K562 (cell line): ENCODE measurements at regions of chr11 and their contacts with region 1.

Region 1: DNA sequence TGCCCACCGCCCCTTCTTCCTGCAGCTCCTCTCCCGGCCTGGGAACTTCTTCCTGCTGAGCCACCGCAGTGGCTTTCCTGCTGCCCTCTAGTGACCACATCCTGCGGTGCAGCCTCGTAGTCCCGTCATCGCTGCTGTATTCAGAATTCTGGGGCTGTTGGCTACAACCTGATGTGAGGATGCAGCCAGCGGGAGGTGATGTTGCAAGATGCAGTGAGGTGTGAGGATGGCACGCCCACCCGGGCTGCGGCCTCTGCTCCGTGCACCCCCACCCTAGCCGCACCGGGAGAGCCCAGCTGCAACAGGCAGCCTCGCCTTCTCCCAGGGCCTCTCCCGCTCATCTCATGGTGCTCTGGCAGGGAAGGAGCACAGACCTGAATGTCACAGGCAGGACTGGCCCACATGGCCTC is 10.1 kb downstream of the CHST1 start:
- DNase-seq: peak; percentile 72 to 84 (median 82)
- ATAC-seq: peak; percentile 93
- H3K4me3 ChIP-seq: no peak overlapping the region
- H3K27ac ChIP-seq: no peak overlapping the region
- H3K4me1 ChIP-seq: peaks cover 0 to 14% of the 10 kb centered on the region in 2 experiments; a peak in 1 of 5 replicates
- H3K27me3 ChIP-seq: peaks cover 0 to 27% of the 10 kb centered on the region in 2 experiments; a peak in 3 of 5 replicates
- CTCF ChIP-seq: peak; percentile 89 to 94 (median 89)
- EP300 ChIP-seq: no peak
- POLR2A ChIP-seq: no peak
- RAD21 ChIP-seq: peak; percentile 63 to 75

Region 2: GRCh38 chr11:45371251-45372115 is 283.9 kb before region 1 on chr11:
- CTCF ChIA-PET with region 1: interaction called, 5 read pairs
- POLR2A ChIA-PET with region 1: no interaction called
- in situ Hi-C with region 1: no loop called
- intact Hi-C with region 1: loop called (anchors 2 kb)
- DNase-seq: peak; percentile 68 to 79 (median 77)
- ATAC-seq: peak; percentile 94
- H3K4me3 ChIP-seq: no peak overlapping the region
- H3K27ac ChIP-seq: no peak overlapping the region
- H3K4me1 ChIP-seq: peaks cover 0 to 2% of the 10 kb centered on the region in 2 experiments; a peak in 1 of 5 replicates
- H3K27me3 ChIP-seq: peaks cover 14 to 40% of the 10 kb centered on the region in 2 experiments
- CTCF ChIP-seq: peak; percentile 85 to 94 (median 91)
- EP300 ChIP-seq: no peak
- POLR2A ChIP-seq: no peak
- RAD21 ChIP-seq: peak; percentile 68 to 79

Region 3: GRCh38 chr11:45457649-45458048 is 197.7 kb before region 1 on chr11:
- CTCF ChIA-PET with region 1: no interaction called
- POLR2A ChIA-PET with region 1: no interaction called
- in situ Hi-C with region 1: no loop called
- intact Hi-C with region 1: loop called (anchors 10 kb)
- DNase-seq: no peak
- ATAC-seq: peak; percentile 75
- H3K4me3 ChIP-seq: no peak overlapping the region
- H3K27ac ChIP-seq: no peak overlapping the region
- H3K4me1 ChIP-seq: no peaks in the 10 kb centered on the region
- H3K27me3 ChIP-seq: peaks cover 0 to 6% of the 10 kb centered on the region in 2 experiments; a peak in 1 of 5 replicates
- CTCF ChIP-seq: no peak
- EP300 ChIP-seq: peak; percentile 29; the same call in 1 of the 2 replicates
- POLR2A ChIP-seq: no peak
- RAD21 ChIP-seq: no peak

Region 4: GRCh38 chr11:45556851-45557707 is 98.3 kb before region 1 on chr11:
- CTCF ChIA-PET with region 1: no interaction called
- POLR2A ChIA-PET with region 1: no interaction called
- in situ Hi-C with region 1: no loop called
- intact Hi-C with region 1: loop called (anchors 10 kb)
- DNase-seq: peak; percentile 20 to 37 (median 28)
- ATAC-seq: peak; percentile 75
- H3K4me3 ChIP-seq: no peak overlapping the region
- H3K27ac ChIP-seq: no peak overlapping the region
- H3K4me1 ChIP-seq: peaks cover 3 to 7% of the 10 kb centered on the region in 2 experiments; a peak in 3 of 5 replicates
- H3K27me3 ChIP-seq: peaks cover 0 to 13% of the 10 kb centered on the region in 2 experiments; a peak in 3 of 5 replicates
- CTCF ChIP-seq: no peak
- EP300 ChIP-seq: peak; percentile 35
- POLR2A ChIP-seq: no peak
- RAD21 ChIP-seq: no peak